ENCODE measurements at regions of chr3 and their contacts with region 1.

Region 1: DNA sequence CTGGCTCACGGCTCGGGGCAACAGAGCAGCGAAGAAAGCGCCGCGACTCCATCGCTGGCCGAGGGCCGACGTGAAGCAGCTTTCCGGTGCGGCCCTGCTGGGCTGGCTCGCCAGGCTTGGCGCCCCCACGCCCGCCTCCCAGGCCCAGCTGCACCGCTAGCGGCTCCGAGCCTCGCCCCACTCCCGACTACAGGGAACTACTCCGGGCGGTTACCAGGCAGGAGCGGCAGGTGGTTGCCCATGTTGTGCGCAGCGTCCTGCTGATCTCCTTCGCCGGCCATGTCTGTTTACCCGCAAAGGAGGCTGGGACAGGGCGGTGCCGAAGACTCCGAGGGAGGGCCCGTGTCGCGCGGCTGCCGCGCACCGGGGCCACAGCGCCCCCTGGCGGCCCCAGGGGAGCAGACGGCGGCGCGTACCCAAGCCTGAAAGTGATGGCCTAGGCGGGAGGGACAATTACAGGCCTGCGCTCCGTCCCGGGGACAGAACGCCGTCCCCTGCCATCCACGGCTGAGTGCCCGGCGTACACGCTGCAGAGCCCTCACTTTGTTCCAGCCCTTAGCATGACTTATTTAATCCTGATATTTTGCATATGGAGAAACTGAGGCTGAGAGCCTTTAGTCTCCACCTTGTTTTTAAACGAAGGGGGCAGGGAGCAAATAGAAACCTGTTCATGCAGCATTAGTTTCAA is at the start of gene CRBN:
- DNase-seq: peak; percentile 93
- ATAC-seq: peak; percentile 100
- total RNA-seq, gene CRBN: 57.4 TPM

Region 2: GRCh38 chr3:3126477-3127431 is 52.8 kb before region 1 on chr3 and contains the start of gene TRNT1:
- intact Hi-C with region 1: loop called (anchors 10 kb)
- DNase-seq: peak; percentile 98
- ATAC-seq: peak; percentile 99
- total RNA-seq, gene TRNT1: 12.6 TPM

Region 3: DNA sequence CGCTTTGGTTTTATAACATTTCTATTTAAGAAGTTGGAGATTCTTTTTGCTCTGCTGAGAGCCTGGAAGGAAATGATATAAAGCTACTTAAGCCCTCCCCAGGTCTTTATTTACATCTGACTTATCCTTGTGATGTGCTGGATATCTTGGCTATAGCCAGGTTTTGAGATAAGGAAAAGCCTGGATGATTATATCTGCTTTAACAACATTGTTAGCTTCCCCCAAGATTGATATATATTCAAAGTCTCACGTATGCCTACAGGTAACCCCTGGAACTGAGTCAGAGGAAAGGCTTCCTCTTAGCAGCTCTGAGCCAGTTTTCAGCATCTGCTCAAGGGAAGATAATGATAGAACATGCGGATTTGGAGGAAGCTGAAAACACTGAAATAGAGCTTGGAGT is 61.4 kb after region 1 on chr3:
- intact Hi-C with region 1: no loop called
- DNase-seq: no peak
- ATAC-seq: no peak

Measured in left ventricle myocardium superior (tissue), 1 donor.